ENCODE measurements at regions of chr11 and their contacts with region 1.

Region 1: GRCh38 chr11:6362873-6363678 is 27.2 kb upstream of the SMPD1 start:
- DNase-seq: peak; percentile 44
- H3K4me3 Mint-ChIP-seq: no peak overlapping the region
- H3K27ac Mint-ChIP-seq: no peak overlapping the region
- H3K4me1 Mint-ChIP-seq: no peaks in the 10 kb centered on the region
- H3K27me3 Mint-ChIP-seq: no peaks in the 10 kb centered on the region

Region 2: GRCh38 chr11:6251120-6251733 is 111.8 kb before region 1 on chr11:
- intact Hi-C with region 1: loop called (anchors 1 kb)
- DNase-seq: peak; percentile 19
- H3K4me3 Mint-ChIP-seq: no peak overlapping the region
- H3K27ac Mint-ChIP-seq: no peak overlapping the region
- H3K4me1 Mint-ChIP-seq: no peaks in the 10 kb centered on the region
- H3K27me3 Mint-ChIP-seq: peaks cover 10% of the 10 kb centered on the region

Region 3: DNA sequence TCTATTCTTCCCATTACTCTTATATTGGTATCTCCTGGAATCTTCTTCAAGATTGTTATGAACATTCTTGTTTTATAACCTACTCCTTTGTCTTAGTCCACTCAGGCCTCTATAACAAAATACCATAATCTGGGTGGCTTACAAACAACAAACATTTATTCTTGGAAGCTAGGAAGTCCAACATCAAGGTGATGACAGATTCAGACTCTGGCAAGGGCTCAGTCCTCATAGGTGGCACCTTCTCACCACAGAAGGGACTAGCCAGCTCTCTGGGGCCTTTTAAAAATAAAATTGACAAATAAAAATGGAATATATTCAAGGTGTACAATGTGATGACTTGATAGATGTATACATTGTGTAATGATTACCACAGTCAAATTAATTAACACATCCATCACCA is 153.8 kb after region 1 on chr11:
- intact Hi-C with region 1: no loop called
- DNase-seq: no peak
- H3K4me3 Mint-ChIP-seq: no peak overlapping the region
- H3K27ac Mint-ChIP-seq: no peak overlapping the region
- H3K4me1 Mint-ChIP-seq: no peaks in the 10 kb centered on the region
- H3K27me3 Mint-ChIP-seq: no peaks in the 10 kb centered on the region

Measured in activated T-helper 1 cell treated with anti-CD3 and anti-CD28 coated beads, Interleukin-12 subunit alpha, Interleukin-12 subunit beta, Interleukin-2, Interleukin-4 antibody, amounts not matched to agents 30 ng/mL and 10 ng/mL and 1 ng/mL, durations not matched to agents 14 hours and 24 hours and 36 hours (primary cell).